ENCODE measurements at regions of chr9 and their contacts with region 1.

Region 1: DNA sequence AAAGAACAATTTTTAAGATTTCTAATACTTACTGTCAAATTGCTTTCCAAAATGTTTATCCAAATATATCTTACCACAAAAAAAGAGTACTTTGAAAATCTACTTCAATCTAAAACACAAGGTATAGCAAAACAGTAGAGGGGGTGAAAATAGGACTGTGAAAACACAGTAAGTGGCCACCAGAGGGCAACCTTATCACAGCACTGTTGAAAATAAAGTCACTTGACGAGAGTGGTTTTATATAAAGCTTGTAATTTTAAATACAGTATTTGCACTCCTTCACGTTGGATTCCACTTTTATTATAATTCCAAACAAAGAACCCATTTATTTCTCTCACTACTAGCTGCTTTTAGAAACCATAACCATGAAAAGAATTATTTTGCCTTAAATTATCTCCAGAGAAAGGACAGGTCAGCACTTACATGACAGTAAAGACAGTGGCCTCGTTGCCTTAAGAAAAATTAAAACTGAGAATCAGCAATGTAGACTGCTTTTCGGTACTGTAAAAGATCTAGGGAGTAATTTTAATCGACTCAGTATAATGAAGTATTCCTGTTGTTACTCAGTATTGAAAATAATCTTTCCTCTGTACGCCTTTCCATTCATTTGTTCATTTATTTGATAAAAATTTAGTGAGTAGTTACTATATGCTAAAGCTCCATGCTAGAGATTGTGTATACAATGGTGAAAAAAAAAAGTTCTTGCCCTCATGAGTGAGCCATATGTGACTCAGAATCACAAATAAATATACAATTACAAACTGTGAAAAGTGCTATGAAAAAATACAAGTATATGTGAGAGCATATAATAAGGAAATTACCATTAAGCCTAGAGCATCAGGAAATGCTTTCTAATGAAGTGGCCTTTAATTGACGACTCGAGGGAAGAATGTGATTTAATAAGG is 40.0 kb upstream of the CDK5RAP2 start:
- DNase-seq: peak; percentile 73 to 76
- H3K4me3 ChIP-seq: no peak overlapping the region
- H3K4me1 ChIP-seq: peaks cover 12% of the 10 kb centered on the region
- H3K27me3 ChIP-seq: no peaks in the 10 kb centered on the region

Region 2: GRCh38 chr9:120366646-120367019 is 253.4 kb before region 1 on chr9:
- in situ Hi-C with region 1: no loop called
- DNase-seq: peak in 1 of 2 experiments; percentile 32
- H3K4me3 ChIP-seq: no peak overlapping the region
- H3K4me1 ChIP-seq: no peaks in the 10 kb centered on the region
- H3K27me3 ChIP-seq: peaks cover under 1% of the 10 kb centered on the region; the same call in 1 of the 2 replicates

Region 3: DNA sequence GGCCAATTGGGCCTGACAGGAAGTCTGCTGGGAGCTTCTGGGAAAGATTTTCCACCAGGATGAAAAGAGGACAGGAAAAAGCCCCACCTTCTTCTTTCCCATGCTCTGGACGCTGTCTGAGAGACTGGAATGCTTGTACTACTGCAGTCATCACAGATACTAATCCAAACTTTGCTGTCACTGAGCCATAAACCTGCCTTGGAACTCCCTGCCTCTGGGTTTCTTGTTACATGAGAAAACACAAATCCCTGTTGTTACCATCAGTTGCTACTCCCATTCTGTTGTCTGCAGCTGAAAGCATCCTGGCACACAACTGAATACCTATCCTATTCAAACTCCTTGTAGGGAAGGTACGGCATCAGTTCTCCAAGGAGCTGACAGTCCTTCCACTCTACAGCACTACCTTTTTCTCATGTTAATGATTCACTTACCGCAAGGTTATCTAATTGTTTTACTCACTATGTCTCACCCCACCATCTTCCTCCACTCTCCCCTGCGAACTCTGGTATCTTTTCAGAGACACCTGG is 207.5 kb before region 1 on chr9:
- in situ Hi-C with region 1: no loop called
- DNase-seq: peak; percentile 23 to 31
- H3K4me3 ChIP-seq: no peak overlapping the region
- H3K4me1 ChIP-seq: peaks cover 26% of the 10 kb centered on the region
- H3K27me3 ChIP-seq: no peaks in the 10 kb centered on the region

Region 4: GRCh38 chr9:120715389-120715924 is 95.5 kb after region 1 on chr9:
- in situ Hi-C with region 1: loop called (anchors 5 kb)
- DNase-seq: peak; percentile 62 to 83
- H3K4me3 ChIP-seq: peak overlapping the region; percentile 65
- H3K4me1 ChIP-seq: peaks cover 33% of the 10 kb centered on the region
- H3K27me3 ChIP-seq: no peaks in the 10 kb centered on the region

Region 5: GRCh38 chr9:120904061-120904977 is 284.3 kb after region 1 on chr9:
- in situ Hi-C with region 1: no loop called
- DNase-seq: no peak
- H3K4me3 ChIP-seq: no peak overlapping the region
- H3K4me1 ChIP-seq: no peaks in the 10 kb centered on the region
- H3K27me3 ChIP-seq: no peaks in the 10 kb centered on the region

Region 6: DNA sequence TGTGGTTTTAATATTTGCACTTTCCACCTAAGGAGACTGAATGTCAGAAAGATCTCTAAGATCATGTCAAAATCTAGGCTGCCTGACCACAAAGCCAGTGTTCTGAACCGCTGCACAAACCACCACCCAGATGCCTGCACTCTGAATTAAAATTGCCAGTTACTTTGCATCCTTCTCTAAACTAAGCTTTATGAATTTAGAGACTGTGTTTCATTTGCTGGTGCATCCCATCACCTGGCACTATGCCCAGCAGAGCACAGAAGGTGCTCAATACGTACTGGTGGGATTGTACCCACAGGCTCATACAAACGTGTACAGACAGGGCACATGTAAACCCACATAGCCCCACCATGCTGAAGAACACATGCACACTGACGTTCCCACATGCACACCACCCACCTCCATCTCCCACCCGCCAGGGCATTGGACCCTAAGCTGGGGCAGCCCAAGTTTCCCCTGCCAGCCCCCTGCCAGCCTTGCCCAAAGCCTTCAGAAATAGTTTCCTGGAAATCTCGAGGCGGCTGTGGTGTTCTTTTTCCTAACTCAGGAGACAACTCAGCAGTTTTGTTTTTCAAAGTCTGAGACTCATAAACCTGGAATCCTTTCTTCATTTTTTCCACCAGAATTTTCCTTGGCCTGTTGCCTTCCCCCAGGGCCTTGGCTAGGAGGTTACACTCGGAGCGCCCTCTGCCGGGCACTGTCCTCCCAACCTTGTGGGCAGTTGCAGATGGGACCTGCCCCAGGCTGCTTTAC is 316.2 kb after region 1 on chr9:
- in situ Hi-C with region 1: loop called (anchors 25 kb)
- DNase-seq: peak; percentile 70 to 96
- H3K4me3 ChIP-seq: no peak overlapping the region
- H3K4me1 ChIP-seq: peaks cover 7% of the 10 kb centered on the region; the same call in 1 of the 2 replicates
- H3K27me3 ChIP-seq: peaks cover 10% of the 10 kb centered on the region

Measured in HAP-1 (cell line).